ENCODE measurements at regions of chr1 and their contacts with region 1.

Region 1: GRCh38 chr1:161045750-161046571 is at the start of gene USF1:
- DNase-seq: peak; percentile 95
- total RNA-seq, gene USF1: 55.3 and 65.1 TPM in 2 replicates

Region 2: DNA sequence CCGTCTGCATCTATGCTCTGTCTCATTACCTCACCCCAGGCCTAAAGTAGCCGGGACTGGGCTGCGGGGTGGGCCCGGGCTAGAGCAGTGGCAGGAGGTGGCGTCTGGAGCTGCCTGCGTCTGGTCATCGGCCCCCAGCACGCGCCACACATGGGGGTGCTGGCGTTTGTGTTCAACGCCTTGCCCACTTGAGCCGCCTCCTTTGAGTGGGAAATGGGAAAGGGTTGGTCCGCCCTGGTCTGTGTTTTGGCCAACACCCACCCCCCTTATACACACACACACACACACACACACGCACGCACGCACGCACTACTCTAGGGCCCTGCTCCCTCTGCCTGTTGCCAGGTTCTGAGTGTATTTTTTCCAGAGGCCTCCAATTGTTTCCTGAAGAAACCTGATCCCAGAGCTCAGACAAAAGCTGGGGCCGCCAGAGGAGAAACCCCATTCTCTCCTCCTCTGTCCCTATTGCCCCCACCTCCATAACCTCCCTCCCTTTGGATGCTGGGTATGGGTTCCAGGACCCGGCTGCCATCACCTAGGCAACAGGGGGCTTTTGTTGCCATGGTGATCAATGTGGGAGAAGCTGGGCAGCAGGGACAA is 635.5 kb before region 1 on chr1:
- in situ Hi-C with region 1: no loop called
- DNase-seq: no peak

Region 3: DNA sequence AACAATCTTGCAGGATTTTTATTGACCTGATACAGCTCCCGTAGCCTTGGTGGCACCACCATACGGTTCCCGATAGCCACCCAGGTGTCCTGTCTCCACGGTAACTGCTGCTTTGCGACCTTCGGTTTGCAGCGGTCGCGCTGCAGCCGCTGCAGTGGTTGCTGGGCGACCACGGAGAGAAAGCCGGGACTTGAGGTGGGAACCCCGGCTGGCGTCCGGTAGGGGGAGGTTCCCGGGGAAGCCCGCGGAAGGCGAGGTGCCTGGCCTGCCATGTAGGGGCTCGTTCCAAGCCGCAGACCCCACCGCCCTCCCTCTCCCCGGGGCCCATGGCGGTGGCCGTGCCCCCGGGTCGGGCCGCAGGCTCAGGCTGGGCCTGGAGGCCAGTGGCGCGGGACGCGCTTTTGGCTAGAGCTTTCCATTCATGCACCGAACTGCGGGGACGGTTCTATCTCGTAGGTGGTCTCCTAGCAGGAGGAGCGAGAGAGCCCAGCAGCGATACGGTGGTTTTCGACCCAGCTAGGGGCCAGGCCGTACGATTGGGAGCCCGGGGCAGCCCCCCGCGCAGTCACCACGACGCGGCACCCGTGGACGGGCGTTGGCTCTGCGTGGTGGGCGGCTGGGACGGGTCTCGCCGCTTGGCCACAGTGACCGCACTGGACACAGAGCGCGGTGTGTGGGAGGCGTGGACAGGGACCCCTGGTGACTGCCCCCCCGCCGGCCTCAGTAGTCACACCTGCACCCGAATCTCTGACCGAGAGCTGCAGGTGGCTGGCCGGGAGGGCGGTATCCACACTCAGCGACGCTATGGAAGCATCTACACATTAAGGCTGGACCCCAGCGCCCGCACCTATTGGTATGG is 52.5 kb after region 1 on chr1 and contains the start of gene KLHDC9:
- in situ Hi-C with region 1: loop called (anchors 10 kb)
- DNase-seq: peak; percentile 92
- total RNA-seq, gene KLHDC9: 3.7 and 23.8 TPM in 2 replicates

Region 4: GRCh38 chr1:161389691-161390558 is 344.0 kb after region 1 on chr1:
- in situ Hi-C with region 1: no loop called
- DNase-seq: peak; percentile 88